Activated T-helper 1 cell treated with anti-CD3 and anti-CD28 coated beads, Interleukin-12 subunit alpha, Interleukin-12 subunit beta, Interleukin-2, Interleukin-4 antibody, amounts not matched to agents 30 ng/mL and 10 ng/mL and 1 ng/mL, durations not matched to agents 14 hours and 24 hours and 36 hours (primary cell): ENCODE measurements at regions of chr6 and their contacts with region 1.

Region 1: DNA sequence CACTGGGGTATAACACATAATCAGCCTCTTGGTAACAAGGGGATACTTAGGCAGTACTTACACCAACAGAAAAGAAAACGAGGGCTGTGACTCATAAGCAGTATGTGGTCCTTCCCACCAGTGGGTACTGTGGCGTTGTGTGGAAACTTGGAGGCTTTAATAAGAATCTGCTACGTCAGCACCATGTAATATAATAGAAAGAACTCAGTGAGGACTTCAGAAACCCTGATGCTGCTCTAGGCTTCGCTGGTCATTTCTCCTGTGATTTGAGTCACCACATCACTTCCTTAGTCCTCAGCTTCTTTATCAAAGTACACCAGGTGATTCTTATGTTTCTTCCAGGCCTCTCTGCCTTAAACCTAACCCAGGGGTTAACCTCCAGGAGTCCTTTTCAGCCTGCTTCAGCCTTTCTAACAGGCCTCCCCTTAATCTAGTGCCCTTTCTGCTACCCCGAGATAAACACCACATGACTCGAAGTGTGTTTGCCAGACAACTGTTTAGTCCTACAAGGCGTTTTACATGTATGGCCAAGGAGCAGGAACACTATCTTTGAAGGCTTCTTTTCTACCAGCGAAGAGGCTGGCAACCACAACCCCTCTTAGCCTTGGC is 68.5 kb downstream of the FYN start:
- DNase-seq: peak; percentile 67
- H3K4me3 Mint-ChIP-seq: peak overlapping the region; percentile 74
- H3K27ac Mint-ChIP-seq: peak overlapping the region; percentile 98
- H3K4me1 Mint-ChIP-seq: peaks cover 84% of the 10 kb centered on the region
- H3K27me3 Mint-ChIP-seq: no peaks in the 10 kb centered on the region

Region 2: DNA sequence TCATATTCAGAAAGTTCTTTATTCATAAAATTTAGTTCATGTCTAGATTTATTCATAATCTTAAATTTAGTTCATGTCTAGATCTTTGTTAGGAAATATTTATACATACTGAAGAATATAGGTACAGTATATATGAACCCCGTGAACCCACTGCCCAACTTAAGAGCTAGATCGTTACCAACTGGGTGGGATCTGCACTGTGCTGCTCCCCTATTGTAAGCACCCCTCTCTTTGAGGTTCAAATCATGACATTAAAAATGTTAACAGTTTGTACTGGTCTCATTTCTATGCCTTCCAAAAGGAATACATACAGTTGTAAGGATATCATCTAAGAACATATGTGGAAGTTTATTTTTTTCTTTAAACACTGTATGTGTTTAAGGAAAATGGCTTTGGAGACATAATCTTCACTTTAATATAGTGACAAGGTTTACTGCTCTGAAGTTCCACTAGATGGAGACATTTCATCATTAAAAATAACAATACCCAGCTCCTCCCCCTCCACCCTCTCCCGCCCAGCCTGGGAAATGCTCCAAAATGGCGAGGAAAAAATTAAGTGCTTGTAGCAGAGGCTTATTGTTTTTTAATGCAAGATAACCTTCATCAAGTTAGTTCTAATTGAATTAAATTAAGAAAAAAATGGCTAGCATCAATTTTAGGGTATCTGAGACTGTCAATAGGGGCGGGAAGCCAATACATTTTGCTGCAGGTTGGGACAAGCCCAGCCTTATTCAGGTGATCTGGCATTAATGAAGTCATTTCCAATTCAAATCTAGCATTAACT is 94.9 kb before region 1 on chr6:
- intact Hi-C with region 1: loop called (anchors 1 kb)
- DNase-seq: peak; percentile 41
- H3K4me3 Mint-ChIP-seq: peak overlapping the region; percentile 45
- H3K27ac Mint-ChIP-seq: peak overlapping the region; percentile 44
- H3K4me1 Mint-ChIP-seq: peaks cover 66% of the 10 kb centered on the region
- H3K27me3 Mint-ChIP-seq: no peaks in the 10 kb centered on the region

Region 3: GRCh38 chr6:111823831-111824607 is 19.3 kb after region 1 on chr6:
- intact Hi-C with region 1: loop called (anchors 1 kb)
- DNase-seq: no peak
- H3K4me3 Mint-ChIP-seq: peak overlapping the region; percentile 72
- H3K27ac Mint-ChIP-seq: peak overlapping the region; percentile 89
- H3K4me1 Mint-ChIP-seq: peaks cover 81% of the 10 kb centered on the region
- H3K27me3 Mint-ChIP-seq: no peaks in the 10 kb centered on the region

Region 4: GRCh38 chr6:111973118-111973761 is 168.5 kb after region 1 on chr6:
- intact Hi-C with region 1: loop called (anchors 1 kb)
- DNase-seq: peak; percentile 47
- H3K4me3 Mint-ChIP-seq: peak overlapping the region; percentile 53
- H3K27ac Mint-ChIP-seq: peak overlapping the region; percentile 87
- H3K4me1 Mint-ChIP-seq: peaks cover 55% of the 10 kb centered on the region
- H3K27me3 Mint-ChIP-seq: no peaks in the 10 kb centered on the region

Region 5: DNA sequence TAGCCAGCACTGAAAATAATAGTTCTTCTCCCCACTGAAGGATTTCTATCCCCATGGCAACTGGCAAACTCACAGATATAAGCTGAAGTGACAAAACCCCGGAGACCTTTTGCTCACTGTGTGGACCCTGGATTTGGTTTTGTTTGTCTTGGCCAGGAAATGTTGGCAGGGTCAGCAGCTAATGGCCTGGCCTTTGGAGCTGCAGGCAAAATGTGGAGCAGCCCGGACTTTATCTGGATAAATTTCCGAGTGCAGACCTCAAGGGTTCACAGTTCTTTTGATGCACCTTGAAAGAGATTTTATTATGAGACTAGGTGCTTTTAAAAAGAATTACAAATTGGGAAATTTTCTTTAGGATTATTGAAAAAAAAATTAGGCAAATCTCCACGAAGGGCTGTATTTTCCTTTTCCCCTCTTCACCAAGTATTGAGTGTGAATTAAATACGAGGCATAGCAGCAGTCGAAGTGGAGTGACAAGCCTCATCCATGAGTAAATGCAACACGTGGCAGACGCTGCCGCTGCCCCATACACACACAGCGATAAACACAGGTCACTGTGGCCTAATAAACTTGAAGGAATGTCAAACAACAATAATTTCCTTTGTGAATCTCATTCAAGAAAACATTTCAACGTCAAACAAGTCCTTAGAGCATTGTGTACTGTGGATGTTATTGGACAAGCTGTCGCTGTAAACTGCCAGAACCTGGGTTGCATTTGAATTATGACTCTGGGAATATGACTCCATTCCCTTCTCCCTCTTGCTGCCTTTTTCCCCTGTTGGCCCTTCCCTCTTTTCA is 214.1 kb after region 1 on chr6:
- intact Hi-C with region 1: loop called (anchors 1 kb)
- DNase-seq: no peak
- H3K4me3 Mint-ChIP-seq: no peak overlapping the region
- H3K27ac Mint-ChIP-seq: no peak overlapping the region
- H3K4me1 Mint-ChIP-seq: peaks cover 50% of the 10 kb centered on the region
- H3K27me3 Mint-ChIP-seq: no peaks in the 10 kb centered on the region